Motor neuron (in vitro differentiated cells): ENCODE measurements at regions of chrX and their contacts with region 1.

Region 1: GRCh38 chrX:153032397-153033118 is 23.7 kb upstream of the PNMA3 start:
- ATAC-seq: peak; percentile 87 to 96 (median 90)
- H3K4me3 ChIP-seq: peak overlapping the region in 4 of 5 donors; percentile 14 to 21 (median 19)
- H3K27ac ChIP-seq: no peak overlapping the region
- H3K4me1 ChIP-seq: no peaks in the 10 kb centered on the region

Region 2: DNA sequence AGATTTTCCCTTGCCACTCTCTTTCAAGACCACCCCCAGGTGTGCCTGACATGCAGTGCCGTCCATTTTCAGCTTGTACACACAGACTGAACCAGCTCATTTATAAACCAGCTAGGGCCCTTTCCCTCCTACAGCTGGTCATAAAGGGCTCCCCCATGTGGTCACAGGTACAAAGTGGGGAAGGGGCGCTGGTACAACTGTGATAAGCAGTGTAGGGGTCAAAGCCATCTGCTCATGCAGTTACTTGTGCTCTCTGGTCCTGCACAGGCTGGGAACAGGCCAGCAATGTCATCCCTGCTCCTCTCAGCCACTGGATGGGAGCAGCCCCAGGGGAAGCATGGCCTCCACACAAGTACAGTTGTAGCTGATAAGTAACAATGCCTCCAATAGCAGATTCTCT is 374.3 kb before region 1 on chrX:
- in situ Hi-C with region 1: no loop called
- ATAC-seq: no peak
- H3K4me3 ChIP-seq: no peak overlapping the region
- H3K27ac ChIP-seq: no peak overlapping the region
- H3K4me1 ChIP-seq: no peaks in the 10 kb centered on the region

Region 3: GRCh38 chrX:152886716-152887115 is 145.8 kb before region 1 on chrX:
- in situ Hi-C with region 1: no loop called
- ATAC-seq: no peak
- H3K4me3 ChIP-seq: no peak overlapping the region
- H3K27ac ChIP-seq: no peak overlapping the region
- H3K4me1 ChIP-seq: no peaks in the 10 kb centered on the region

Region 4: GRCh38 chrX:153164733-153165132 is 132.2 kb after region 1 on chrX:
- in situ Hi-C with region 1: no loop called
- ATAC-seq: no peak
- H3K4me3 ChIP-seq: no peak overlapping the region
- H3K27ac ChIP-seq: no peak overlapping the region
- H3K4me1 ChIP-seq: no peaks in the 10 kb centered on the region

Region 5: GRCh38 chrX:153214934-153215333 is 182.4 kb after region 1 on chrX:
- in situ Hi-C with region 1: no loop called
- ATAC-seq: no peak
- H3K4me3 ChIP-seq: no peak overlapping the region
- H3K27ac ChIP-seq: no peak overlapping the region
- H3K4me1 ChIP-seq: no peaks in the 10 kb centered on the region

Region 6: GRCh38 chrX:153400146-153401127 is 367.9 kb after region 1 on chrX:
- in situ Hi-C with region 1: loop called in 1 of 9 experiments (anchors 25 kb)
- ATAC-seq: no peak
- H3K4me3 ChIP-seq: no peak overlapping the region
- H3K27ac ChIP-seq: no peak overlapping the region
- H3K4me1 ChIP-seq: no peaks in the 10 kb centered on the region